ENCODE measurements at regions of chr7 and their contacts with region 1.

Region 1: GRCh38 chr7:106659963-106660861 is 746 bp downstream of the CCDC71L start:
- DNase-seq: peak; percentile 76 to 92
- H3K4me3 ChIP-seq: peak overlapping the region; percentile 67 to 92 (median 80)
- H3K27ac ChIP-seq: peak overlapping the region; percentile 87
- H3K4me1 ChIP-seq: no peaks in the 10 kb centered on the region
- H3K27me3 ChIP-seq: no peaks in the 10 kb centered on the region
- CTCF ChIP-seq: peak; percentile 85 to 92 (median 86)
- EP300 ChIP-seq: peak in 1 of 2 experiments; percentile 57; a peak in 1 of 3 replicates
- POLR2A ChIP-seq: peak; percentile 62 to 67
- RAD21 ChIP-seq: peak; percentile 73 to 77

Region 2: DNA sequence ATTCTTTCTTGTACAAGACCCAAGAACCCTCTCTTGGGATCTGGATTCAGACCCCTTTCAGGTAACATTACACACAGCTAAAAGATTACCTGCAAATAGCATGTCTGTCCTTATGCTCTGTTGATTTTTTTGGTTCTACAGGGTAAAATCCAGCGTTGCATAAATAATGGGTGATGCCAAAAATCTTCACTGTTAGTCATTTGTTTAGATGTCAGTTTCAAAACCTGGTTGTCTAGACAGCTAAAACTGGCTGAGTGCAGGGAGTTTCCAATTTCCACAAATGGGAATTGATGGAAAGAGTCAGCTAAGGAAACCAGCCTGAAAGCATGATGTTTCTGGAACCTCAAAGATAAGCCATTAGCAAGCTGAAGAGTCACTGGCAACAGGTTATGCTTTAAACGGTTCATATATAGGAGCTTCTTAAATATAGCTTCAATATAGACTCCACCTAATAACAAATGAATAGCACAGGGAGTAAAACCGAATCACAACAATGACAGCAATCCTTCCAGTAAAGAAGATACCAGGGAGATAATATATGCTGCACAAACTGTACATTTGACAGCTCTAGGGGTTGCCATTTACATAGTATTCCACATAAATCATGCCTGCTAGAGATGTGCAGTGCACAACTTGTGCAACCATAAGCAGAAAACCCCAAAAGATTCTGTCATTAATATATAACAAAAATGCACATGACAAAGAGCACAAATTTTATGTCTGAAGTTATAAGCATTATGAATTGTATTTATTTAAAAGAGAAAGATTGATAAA is 19.7 kb before region 1 on chr7:
- CTCF ChIA-PET with region 1: interaction called, 11 read pairs
- POLR2A ChIA-PET with region 1: no interaction called
- DNase-seq: no peak
- H3K4me3 ChIP-seq: no peak overlapping the region
- H3K27ac ChIP-seq: no peak overlapping the region
- H3K4me1 ChIP-seq: no peaks in the 10 kb centered on the region
- H3K27me3 ChIP-seq: no peaks in the 10 kb centered on the region
- CTCF ChIP-seq: no peak
- EP300 ChIP-seq: no peak
- POLR2A ChIP-seq: no peak
- RAD21 ChIP-seq: no peak

Region 3: GRCh38 chr7:106679153-106679931 is 19.1 kb after region 1 on chr7:
- CTCF ChIA-PET with region 1: no interaction called
- POLR2A ChIA-PET with region 1: no interaction called
- DNase-seq: no peak
- H3K4me3 ChIP-seq: no peak overlapping the region
- H3K27ac ChIP-seq: no peak overlapping the region
- H3K4me1 ChIP-seq: no peaks in the 10 kb centered on the region
- H3K27me3 ChIP-seq: no peaks in the 10 kb centered on the region
- CTCF ChIP-seq: no peak
- EP300 ChIP-seq: no peak
- POLR2A ChIP-seq: no peak
- RAD21 ChIP-seq: no peak

Region 4: DNA sequence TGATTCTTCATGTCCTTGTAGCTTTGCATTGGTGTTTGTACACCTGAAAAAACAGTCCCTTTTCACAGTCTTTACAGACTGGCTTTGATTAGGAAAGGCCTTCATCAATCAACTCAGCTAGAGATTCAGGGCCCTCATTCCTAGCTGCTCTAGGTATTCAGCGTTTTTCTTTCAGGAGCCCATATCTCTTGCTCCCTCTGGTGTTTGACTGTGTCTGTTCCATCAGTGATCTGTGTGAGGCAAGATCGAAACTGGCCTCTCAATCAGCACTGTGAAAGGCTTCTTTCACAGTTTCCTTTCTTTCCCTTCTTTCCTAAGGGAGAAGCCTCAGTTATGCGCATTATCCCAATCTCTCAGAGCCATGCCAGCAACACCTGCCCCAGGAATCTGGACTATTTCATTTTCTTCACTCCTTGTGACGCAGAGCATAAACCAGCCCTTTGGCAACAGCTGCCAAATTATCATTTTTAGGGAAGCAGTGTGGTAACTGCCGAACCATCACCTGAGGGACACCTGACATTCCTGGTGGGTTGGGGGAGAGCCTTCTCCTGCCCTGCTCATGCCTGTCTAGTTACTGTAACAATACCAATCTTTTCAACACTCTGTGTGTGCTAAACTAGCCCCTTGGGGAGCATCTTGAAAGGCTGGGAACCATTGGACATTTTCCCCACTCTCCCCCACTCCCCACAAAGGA is 76.4 kb after region 1 on chr7:
- CTCF ChIA-PET with region 1: interaction called, 27 read pairs
- POLR2A ChIA-PET with region 1: interaction called, 7 read pairs
- DNase-seq: peak in 1 of 2 experiments; percentile 60
- H3K4me3 ChIP-seq: no peak overlapping the region
- H3K27ac ChIP-seq: no peak overlapping the region
- H3K4me1 ChIP-seq: peaks cover 0 to 6% (median 5%) of the 10 kb centered on the region in 4 experiments; a peak in 5 of 7 replicates
- H3K27me3 ChIP-seq: no peaks in the 10 kb centered on the region
- CTCF ChIP-seq: peak in 2 of 3 experiments; percentile 82 to 83; a peak in 3 of 4 replicates
- EP300 ChIP-seq: peak in 1 of 2 experiments; percentile 15; a peak in 1 of 3 replicates
- POLR2A ChIP-seq: no peak
- RAD21 ChIP-seq: peak; percentile 78 to 83

Measured in H1 (cell line).